HEK293 (cell line): ENCODE measurements at regions of chr1 and their contacts with region 1.

Region 1: GRCh38 chr1:148334339-148335130 is 148.6 kb downstream of the PPIAL4G start:
- H3K4me3 ChIP-seq: peak overlapping the region; percentile 57
- H3K27ac ChIP-seq: peak overlapping the region; percentile 100
- H3K4me1 ChIP-seq: peaks cover 2% of the 10 kb centered on the region; the same call in 1 of the 2 replicates
- CTCF ChIP-seq: 0 out of 2 replicates have a peak, but pooled peaks have one; percentile 40

Region 2: GRCh38 chr1:148263128-148263905 is 71.2 kb before region 1 on chr1:
- CTCF ChIA-PET with region 1: no interaction called
- POLR2A ChIA-PET with region 1: interaction called, 91 read pairs
- H3K4me3 ChIP-seq: peak overlapping the region; percentile 58
- H3K27ac ChIP-seq: peak overlapping the region; percentile 98
- H3K4me1 ChIP-seq: no peaks in the 10 kb centered on the region
- CTCF ChIP-seq: no peak

Region 3: DNA sequence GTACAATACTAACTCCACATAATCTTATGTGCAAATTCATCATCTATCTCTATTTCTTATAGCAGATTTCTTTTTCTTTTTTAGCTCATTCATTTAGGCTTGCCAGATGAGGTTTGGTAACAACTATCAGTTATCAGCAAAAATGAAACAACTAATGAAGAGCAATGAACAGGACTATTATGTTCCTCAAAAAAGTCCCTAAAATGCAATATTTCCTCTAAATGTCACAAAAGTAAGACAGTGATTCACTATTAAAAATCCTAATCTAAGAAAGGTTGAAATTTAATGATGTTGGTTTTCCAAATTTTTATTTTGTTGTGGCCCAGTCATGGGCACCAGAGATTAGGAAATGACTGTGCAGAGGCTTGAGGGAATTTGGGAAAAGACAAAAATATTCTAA is 13.2 kb after region 1 on chr1:
- CTCF ChIA-PET with region 1: interaction called, 16 read pairs
- POLR2A ChIA-PET with region 1: interaction called, 5 read pairs
- H3K4me3 ChIP-seq: no peak overlapping the region
- H3K27ac ChIP-seq: no peak overlapping the region
- H3K4me1 ChIP-seq: no peaks in the 10 kb centered on the region
- CTCF ChIP-seq: no peak